Left ventricle myocardium superior (tissue), 1 donor: ENCODE measurements at regions of chr11 and their contacts with region 1.

Region 1: DNA sequence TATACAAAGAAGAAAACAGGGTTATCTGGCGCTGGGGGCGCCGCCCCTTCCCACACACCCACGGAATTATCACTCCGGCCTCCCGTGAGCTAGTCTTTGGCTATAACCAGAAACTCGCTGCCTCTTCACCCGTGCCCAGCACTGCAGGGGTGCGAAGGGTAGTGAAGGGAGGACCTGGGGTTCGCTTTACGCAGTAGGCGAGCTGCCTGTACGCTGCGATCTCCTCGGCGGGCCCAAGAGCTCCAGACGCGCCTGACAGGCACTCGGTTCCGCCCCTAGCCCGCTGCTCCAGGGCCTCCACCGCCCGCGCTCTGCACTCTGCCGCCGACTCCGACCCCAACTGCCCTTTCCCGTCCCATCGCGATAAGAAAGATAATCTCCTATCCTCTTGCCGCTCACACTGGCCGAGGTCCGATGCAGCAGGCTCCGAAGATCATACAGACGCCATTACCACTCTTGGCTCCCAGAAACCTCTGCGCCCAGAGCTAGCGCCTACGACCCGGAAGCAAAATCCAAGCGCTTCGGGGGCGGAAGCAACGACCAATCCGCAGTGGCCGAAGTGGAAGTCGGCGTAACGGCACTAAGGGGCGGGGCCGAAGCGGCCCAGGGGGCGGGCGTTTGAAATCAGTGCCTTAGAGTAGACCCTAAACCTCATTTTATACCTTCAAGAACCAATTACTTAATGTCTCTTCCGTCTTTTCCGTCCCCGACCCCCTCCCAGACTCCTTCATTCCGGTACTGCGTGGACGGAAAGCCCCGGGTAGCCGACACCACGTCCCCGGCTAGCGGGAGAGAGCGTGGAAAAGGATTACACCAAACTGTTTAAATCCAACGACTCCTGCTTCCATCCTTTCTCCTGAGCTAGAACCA is at the starts of genes CWC15 and KDM4D:
- DNase-seq: peak; percentile 95
- ATAC-seq: peak; percentile 100
- total RNA-seq, gene CWC15: 80.3 TPM
- total RNA-seq, gene KDM4D: 0.59 TPM

Region 2: GRCh38 chr11:94553938-94554337 is 419.4 kb before region 1 on chr11:
- intact Hi-C with region 1: no loop called
- DNase-seq: no peak
- ATAC-seq: no peak

Region 3: GRCh38 chr11:95067039-95067840 is 93.9 kb after region 1 on chr11:
- intact Hi-C with region 1: loop called (anchors 10 kb)
- DNase-seq: peak; percentile 93
- ATAC-seq: peak; percentile 89